Motor neuron (in vitro differentiated cells): ENCODE measurements at regions of chr17 and their contacts with region 1.

Region 1: DNA sequence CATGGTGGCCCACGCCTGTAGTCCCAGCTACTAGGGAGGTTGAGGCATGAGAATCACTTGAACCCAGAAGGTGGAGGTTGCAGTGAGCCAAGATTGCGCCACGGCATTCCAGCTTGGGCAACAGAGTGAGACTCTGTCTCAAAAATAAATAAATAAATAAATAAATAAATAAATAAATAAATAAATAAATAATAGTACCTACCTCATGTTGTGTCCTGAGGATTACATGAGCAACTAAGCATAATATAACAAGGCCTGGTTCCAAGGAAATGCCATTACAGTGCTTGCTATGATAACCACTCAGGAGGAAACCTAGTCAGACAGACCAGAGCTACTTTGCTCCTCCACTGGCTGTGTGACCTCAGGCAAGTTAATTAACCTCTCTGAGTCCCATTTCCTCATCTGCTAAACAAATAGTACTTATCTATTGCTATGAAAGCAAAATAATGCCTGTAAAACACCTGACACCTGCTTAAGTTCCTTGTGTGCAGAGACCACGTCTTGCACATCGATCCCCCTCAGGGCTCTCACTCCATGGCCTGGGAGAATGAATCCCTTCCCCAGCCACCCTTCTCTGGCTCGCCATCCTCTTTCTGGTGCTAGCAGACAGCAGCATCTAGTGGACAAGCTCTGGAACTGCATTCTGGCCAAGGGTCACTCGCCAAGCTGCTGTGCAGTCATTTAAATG is 7.5 kb downstream of the EPOP start:
- ATAC-seq: peak; percentile 48 to 88 (median 58)
- H3K4me3 ChIP-seq: no peak overlapping the region
- H3K27ac ChIP-seq: no peak overlapping the region
- H3K4me1 ChIP-seq: no peaks in the 10 kb centered on the region

Region 2: GRCh38 chr17:38485146-38485468 is 182.1 kb before region 1 on chr17:
- in situ Hi-C with region 1: loop called in 2 of 9 experiments (anchors 5 to 10 kb)
- ATAC-seq: no peak
- H3K4me3 ChIP-seq: no peak overlapping the region
- H3K27ac ChIP-seq: no peak overlapping the region
- H3K4me1 ChIP-seq: peaks cover 0 to 6% of the 10 kb centered on the region in 2 donors

Region 3: GRCh38 chr17:38498186-38498752 is 169.0 kb before region 1 on chr17:
- in situ Hi-C with region 1: loop called in 4 of 9 experiments (anchors 5 to 25 kb)
- ATAC-seq: no peak
- H3K4me3 ChIP-seq: no peak overlapping the region
- H3K27ac ChIP-seq: no peak overlapping the region
- H3K4me1 ChIP-seq: no peaks in the 10 kb centered on the region

Region 4: DNA sequence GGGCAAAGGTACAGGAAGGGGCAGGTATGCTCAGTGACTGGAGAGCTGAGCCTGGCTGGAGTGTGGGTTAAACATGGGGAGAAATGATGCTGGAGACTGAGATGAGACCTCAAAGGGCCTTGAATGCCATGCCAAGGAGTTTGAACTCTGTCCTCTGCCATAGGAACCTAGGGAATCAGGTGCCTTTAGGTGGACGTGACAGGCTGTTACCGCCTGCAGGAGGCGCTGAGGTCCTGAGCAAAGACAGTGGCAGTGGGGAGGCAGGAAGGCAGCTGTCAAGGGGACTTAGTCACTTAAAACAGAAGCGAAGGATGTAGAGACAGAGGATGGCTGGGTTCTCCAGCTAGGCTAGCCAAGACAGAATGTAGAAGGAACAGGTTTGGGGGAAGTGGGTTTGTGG is 94.4 kb after region 1 on chr17:
- in situ Hi-C with region 1: no loop called
- ATAC-seq: peak in 3 of 8 experiments; percentile 18 to 46 (median 20)
- H3K4me3 ChIP-seq: no peak overlapping the region
- H3K27ac ChIP-seq: no peak overlapping the region
- H3K4me1 ChIP-seq: no peaks in the 10 kb centered on the region

Region 5: GRCh38 chr17:38777641-38778250 is 110.5 kb after region 1 on chr17:
- in situ Hi-C with region 1: no loop called
- ATAC-seq: no peak
- H3K4me3 ChIP-seq: no peak overlapping the region
- H3K27ac ChIP-seq: no peak overlapping the region
- H3K4me1 ChIP-seq: no peaks in the 10 kb centered on the region